ENCODE measurements at regions of chr12 and their contacts with region 1.

Region 1: GRCh38 chr12:61384511-61384910 is 875.7 kb upstream of the USP15 start:
- DNase-seq: no peak
- H3K4me3 ChIP-seq: no peak overlapping the region
- H3K27ac ChIP-seq: no peak overlapping the region
- H3K4me1 ChIP-seq: no peaks in the 10 kb centered on the region
- H3K27me3 ChIP-seq: no peaks in the 10 kb centered on the region
- CTCF ChIP-seq: no peak
- EP300 ChIP-seq: no peak
- POLR2A ChIP-seq: no peak

Region 2: GRCh38 chr12:62050785-62051184 is 666.3 kb after region 1 on chr12:
- intact Hi-C with region 1: loop called in 1 of 4 experiments (anchors 5 kb)
- DNase-seq: no peak
- H3K4me3 ChIP-seq: no peak overlapping the region
- H3K27ac ChIP-seq: no peak overlapping the region
- H3K4me1 ChIP-seq: peaks cover 1% of the 10 kb centered on the region
- H3K27me3 ChIP-seq: no peaks in the 10 kb centered on the region
- CTCF ChIP-seq: no peak
- EP300 ChIP-seq: no peak
- POLR2A ChIP-seq: no peak

Measured in ovary (tissue), 10 donors.